ENCODE measurements at regions of chr15 and their contacts with region 1.

Region 1: DNA sequence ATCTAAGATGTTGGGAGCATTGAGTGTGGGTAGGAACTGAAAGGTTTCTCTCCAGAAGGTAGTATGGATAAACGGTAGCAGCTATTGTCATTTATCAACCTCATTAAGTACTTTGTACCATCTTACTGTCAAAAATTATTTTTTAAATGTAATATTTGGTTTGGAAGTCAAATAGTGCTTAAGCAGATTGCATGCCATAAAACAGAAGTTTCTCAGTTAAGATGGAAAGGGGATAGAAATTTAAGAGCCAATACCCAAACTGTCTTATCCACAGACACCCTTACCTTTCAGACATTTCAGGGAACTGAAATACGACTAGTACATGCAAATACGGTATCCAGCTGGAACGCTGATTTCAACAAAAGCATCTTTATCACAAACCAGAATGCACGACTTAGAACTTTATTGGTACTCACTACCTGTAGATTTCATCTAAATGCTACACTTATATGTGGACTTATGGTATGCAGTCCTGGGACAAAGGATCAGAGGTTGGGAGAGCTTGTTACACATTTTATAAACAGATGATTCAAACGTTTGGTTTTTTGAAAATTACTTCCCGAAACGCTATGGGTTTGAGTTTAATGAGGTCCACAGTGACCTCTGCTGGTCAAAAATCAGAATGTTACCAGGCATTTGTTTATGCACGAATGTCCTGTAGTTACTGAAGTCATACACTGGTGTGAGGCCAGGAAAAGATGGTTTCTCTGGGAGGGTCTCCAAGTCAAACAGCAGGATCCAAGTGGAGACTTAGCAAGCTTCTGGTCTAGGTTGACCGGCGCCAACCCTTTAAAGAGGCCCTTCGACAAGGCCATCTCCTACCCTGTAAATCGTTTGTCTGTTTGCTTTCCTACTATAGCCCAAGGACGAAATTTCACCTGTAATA is 45.7 kb upstream of the DUT start:
- DNase-seq: peak in 8 of 9 donors; percentile 7 to 51 (median 34)
- ATAC-seq: peak; percentile 72
- H3K4me3 ChIP-seq: no peak overlapping the region
- H3K4me3 Mint-ChIP-seq: peak overlapping the region in 5 of 10 donors; percentile 23 to 53 (median 33)
- H3K27ac ChIP-seq: no peak overlapping the region
- H3K27ac Mint-ChIP-seq: peak overlapping the region in 1 of 9 donors; percentile 16
- H3K4me1 ChIP-seq: no peaks in the 10 kb centered on the region
- H3K4me1 Mint-ChIP-seq: peaks cover 0 to 12% (median 5%) of the 10 kb centered on the region in 7 donors
- H3K27me3 ChIP-seq: no peaks in the 10 kb centered on the region
- H3K27me3 Mint-ChIP-seq: peaks cover 0 to 20% (median 11%) of the 10 kb centered on the region in 5 donors

Region 2: DNA sequence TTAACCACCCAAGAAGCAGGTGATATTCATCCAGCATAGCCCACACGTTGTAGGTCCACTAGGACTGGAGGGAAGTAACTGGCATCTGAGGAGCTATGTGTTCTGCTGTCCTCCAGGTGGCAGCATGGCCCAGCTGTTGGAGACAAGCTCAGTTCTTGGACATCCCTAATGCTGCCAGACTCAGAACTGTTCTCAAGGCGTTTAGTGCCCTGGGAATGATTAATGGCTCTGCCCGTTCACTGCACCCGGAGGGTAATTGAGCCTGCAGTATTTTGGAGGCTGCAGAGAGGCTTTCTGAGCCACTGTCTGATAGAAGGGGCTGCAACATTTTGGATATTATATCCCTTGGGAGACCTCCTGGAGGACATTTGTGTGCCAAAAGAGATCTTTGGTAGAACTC is 1089.5 kb before region 1 on chr15:
- CTCF ChIA-PET with region 1: no interaction called
- POLR2A ChIA-PET with region 1: no interaction called
- intact Hi-C with region 1: loop called (anchors 1 to 5 kb)
- DNase-seq: peak in 7 of 9 donors; percentile 9 to 34 (median 19)
- ATAC-seq: peak; percentile 57
- H3K4me3 ChIP-seq: no peak overlapping the region
- H3K4me3 Mint-ChIP-seq: no peak overlapping the region
- H3K27ac ChIP-seq: no peak overlapping the region
- H3K27ac Mint-ChIP-seq: no peak overlapping the region
- H3K4me1 ChIP-seq: no peaks in the 10 kb centered on the region
- H3K4me1 Mint-ChIP-seq: no peaks in the 10 kb centered on the region
- H3K27me3 ChIP-seq: no peaks in the 10 kb centered on the region
- H3K27me3 Mint-ChIP-seq: peaks cover 2 to 31% (median 8%) of the 10 kb centered on the region in 5 donors

Region 3: DNA sequence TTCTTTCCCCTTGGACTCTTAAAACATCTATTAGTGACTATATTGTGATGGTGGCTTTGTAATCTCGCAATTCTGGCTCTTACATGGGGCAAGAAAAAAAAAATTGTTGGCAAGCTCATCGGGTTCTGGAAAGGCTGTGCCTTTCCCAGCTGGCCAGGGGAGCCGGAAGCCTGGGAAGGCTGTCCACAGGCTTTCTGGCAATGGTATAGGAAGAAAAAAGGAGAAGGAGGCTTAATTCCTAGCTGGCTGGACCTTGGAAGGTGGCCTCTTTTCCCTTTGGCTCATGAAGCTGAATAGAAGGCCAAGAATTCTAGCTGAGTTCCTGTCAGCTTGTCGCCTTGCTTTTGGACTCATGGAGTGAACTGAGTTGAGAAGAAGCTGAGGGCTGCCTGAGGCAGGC is 811.7 kb before region 1 on chr15:
- CTCF ChIA-PET with region 1: no interaction called
- POLR2A ChIA-PET with region 1: no interaction called
- intact Hi-C with region 1: loop called in 1 of 2 experiments (anchors 5 kb)
- DNase-seq: no peak
- ATAC-seq: no peak
- H3K4me3 ChIP-seq: no peak overlapping the region
- H3K4me3 Mint-ChIP-seq: no peak overlapping the region
- H3K27ac ChIP-seq: no peak overlapping the region
- H3K27ac Mint-ChIP-seq: no peak overlapping the region
- H3K4me1 ChIP-seq: no peaks in the 10 kb centered on the region
- H3K4me1 Mint-ChIP-seq: no peaks in the 10 kb centered on the region
- H3K27me3 ChIP-seq: no peaks in the 10 kb centered on the region
- H3K27me3 Mint-ChIP-seq: peaks cover 0 to 4% (median 0%) of the 10 kb centered on the region in 5 donors

Region 4: GRCh38 chr15:48309740-48310139 is 24.2 kb after region 1 on chr15:
- CTCF ChIA-PET with region 1: no interaction called
- POLR2A ChIA-PET with region 1: no interaction called
- intact Hi-C with region 1: no loop called
- DNase-seq: no peak
- ATAC-seq: no peak
- H3K4me3 ChIP-seq: no peak overlapping the region
- H3K4me3 Mint-ChIP-seq: no peak overlapping the region
- H3K27ac ChIP-seq: no peak overlapping the region
- H3K27ac Mint-ChIP-seq: no peak overlapping the region
- H3K4me1 ChIP-seq: no peaks in the 10 kb centered on the region
- H3K4me1 Mint-ChIP-seq: peaks cover 0 to 1% (median 0%) of the 10 kb centered on the region in 7 donors
- H3K27me3 ChIP-seq: no peaks in the 10 kb centered on the region
- H3K27me3 Mint-ChIP-seq: peaks cover 0 to 15% (median 2%) of the 10 kb centered on the region in 5 donors

Measured in naive thymus-derived CD4-positive, alpha-beta T cell (primary cell).